ENCODE measurements at regions of chr1 and their contacts with region 1.

Region 1: DNA sequence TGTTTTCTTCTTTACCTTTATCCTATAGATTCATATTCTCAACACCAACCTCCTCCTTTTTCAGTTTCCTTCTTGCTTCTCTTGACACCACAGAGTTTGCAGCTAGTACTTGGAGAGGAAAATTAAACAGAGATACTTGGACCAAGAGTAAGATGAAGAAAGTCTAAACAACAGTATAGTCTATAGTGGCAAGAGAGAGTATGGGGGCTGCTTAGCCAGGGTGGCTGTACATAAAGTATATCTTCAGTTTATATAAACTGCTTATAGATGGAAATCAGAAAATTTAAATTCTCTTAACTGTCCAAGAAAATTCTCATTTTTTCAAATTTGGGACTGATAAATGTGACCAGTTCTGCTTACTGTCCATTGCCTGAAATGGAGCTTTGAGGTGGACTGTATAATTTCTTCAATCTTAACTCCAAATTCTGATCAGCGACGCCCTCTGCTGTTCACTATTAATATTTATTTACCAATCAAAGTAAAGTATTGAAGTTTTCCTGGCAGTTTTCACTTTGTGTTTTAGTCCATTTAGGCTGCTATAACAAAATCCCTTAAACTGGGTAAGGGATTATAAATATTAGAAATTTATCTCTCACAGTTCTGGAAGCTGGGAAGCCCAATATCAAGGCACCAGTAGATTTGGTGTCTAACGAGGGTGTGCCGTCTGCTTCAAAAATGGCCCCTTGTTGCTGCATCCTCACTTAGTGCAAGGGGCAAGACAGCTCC is 14.8 kb upstream of the METTL18 start:
- DNase-seq: no peak
- H3K4me3 ChIP-seq: no peak overlapping the region
- H3K27ac ChIP-seq: no peak overlapping the region
- H3K4me1 ChIP-seq: no peaks in the 10 kb centered on the region
- H3K27me3 ChIP-seq: no peaks in the 10 kb centered on the region
- CTCF ChIP-seq: peak in 2 of 3 experiments; percentile 10 to 35; a peak in 2 of 4 replicates
- EP300 ChIP-seq: no peak
- POLR2A ChIP-seq: no peak
- RAD21 ChIP-seq: peak; percentile 58 to 62

Region 2: DNA sequence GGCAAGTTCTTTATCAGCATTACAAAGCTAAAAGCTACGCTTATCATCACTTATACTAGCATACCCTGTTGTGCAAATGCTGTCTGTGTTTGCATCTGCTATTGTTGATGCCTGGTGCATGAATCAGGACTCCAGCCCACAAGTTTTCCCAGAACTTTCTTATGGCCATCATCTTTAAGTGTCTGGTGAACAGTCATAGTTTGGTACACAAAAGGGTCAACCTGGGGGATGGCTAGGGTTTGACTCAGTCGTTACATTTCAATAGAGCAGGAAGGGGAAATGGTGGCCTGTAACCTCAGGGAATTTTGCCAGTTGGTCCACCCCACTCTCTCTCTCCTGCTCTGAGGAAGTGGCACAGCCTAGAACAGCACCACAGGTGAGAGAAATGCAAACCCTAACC is 133.5 kb before region 1 on chr1:
- CTCF ChIA-PET with region 1: no interaction called
- POLR2A ChIA-PET with region 1: no interaction called
- DNase-seq: peak in 1 of 2 experiments; percentile 21
- H3K4me3 ChIP-seq: no peak overlapping the region
- H3K27ac ChIP-seq: no peak overlapping the region
- H3K4me1 ChIP-seq: peaks cover 0 to 4% (median 2%) of the 10 kb centered on the region in 4 experiments; a peak in 1 of 7 replicates
- H3K27me3 ChIP-seq: peaks cover 14 to 25% (median 19%) of the 10 kb centered on the region in 4 experiments
- CTCF ChIP-seq: no peak
- EP300 ChIP-seq: no peak
- POLR2A ChIP-seq: no peak
- RAD21 ChIP-seq: no peak

Region 3: GRCh38 chr1:169741666-169742394 is 67.7 kb before region 1 on chr1:
- CTCF ChIA-PET with region 1: interaction called, 10 read pairs
- POLR2A ChIA-PET with region 1: no interaction called
- DNase-seq: no peak
- H3K4me3 ChIP-seq: no peak overlapping the region
- H3K27ac ChIP-seq: no peak overlapping the region
- H3K4me1 ChIP-seq: peaks cover 0 to 7% (median 2%) of the 10 kb centered on the region in 4 experiments; a peak in 4 of 7 replicates
- H3K27me3 ChIP-seq: no peaks in the 10 kb centered on the region
- CTCF ChIP-seq: no peak
- EP300 ChIP-seq: no peak
- POLR2A ChIP-seq: no peak
- RAD21 ChIP-seq: no peak

Region 4: GRCh38 chr1:169776440-169776839 is 33.1 kb before region 1 on chr1:
- CTCF ChIA-PET with region 1: interaction called, 10 read pairs
- POLR2A ChIA-PET with region 1: no interaction called
- DNase-seq: no peak
- H3K4me3 ChIP-seq: no peak overlapping the region
- H3K27ac ChIP-seq: no peak overlapping the region
- H3K4me1 ChIP-seq: peaks cover 0 to 16% (median 8%) of the 10 kb centered on the region in 4 experiments; a peak in 5 of 7 replicates
- H3K27me3 ChIP-seq: no peaks in the 10 kb centered on the region
- CTCF ChIP-seq: no peak
- EP300 ChIP-seq: no peak
- POLR2A ChIP-seq: no peak
- RAD21 ChIP-seq: no peak

Region 5: GRCh38 chr1:169835647-169836046 is 26.1 kb after region 1 on chr1:
- CTCF ChIA-PET with region 1: no interaction called
- POLR2A ChIA-PET with region 1: no interaction called
- DNase-seq: no peak
- H3K4me3 ChIP-seq: no peak overlapping the region
- H3K27ac ChIP-seq: no peak overlapping the region
- H3K4me1 ChIP-seq: no peaks in the 10 kb centered on the region
- H3K27me3 ChIP-seq: no peaks in the 10 kb centered on the region
- CTCF ChIP-seq: no peak
- EP300 ChIP-seq: no peak
- POLR2A ChIP-seq: no peak
- RAD21 ChIP-seq: no peak

Region 6: GRCh38 chr1:169879034-169879840 is 69.7 kb after region 1 on chr1:
- CTCF ChIA-PET with region 1: no interaction called
- POLR2A ChIA-PET with region 1: no interaction called
- DNase-seq: no peak
- H3K4me3 ChIP-seq: no peak overlapping the region
- H3K27ac ChIP-seq: no peak overlapping the region
- H3K4me1 ChIP-seq: no peaks in the 10 kb centered on the region
- H3K27me3 ChIP-seq: no peaks in the 10 kb centered on the region
- CTCF ChIP-seq: no peak
- EP300 ChIP-seq: no peak
- POLR2A ChIP-seq: no peak
- RAD21 ChIP-seq: no peak